Activated B cell treated with CpG ODN at 0.5 μM for 24 hours (primary cell): ENCODE measurements at regions of chr22 and their contacts with region 1.

Region 1: DNA sequence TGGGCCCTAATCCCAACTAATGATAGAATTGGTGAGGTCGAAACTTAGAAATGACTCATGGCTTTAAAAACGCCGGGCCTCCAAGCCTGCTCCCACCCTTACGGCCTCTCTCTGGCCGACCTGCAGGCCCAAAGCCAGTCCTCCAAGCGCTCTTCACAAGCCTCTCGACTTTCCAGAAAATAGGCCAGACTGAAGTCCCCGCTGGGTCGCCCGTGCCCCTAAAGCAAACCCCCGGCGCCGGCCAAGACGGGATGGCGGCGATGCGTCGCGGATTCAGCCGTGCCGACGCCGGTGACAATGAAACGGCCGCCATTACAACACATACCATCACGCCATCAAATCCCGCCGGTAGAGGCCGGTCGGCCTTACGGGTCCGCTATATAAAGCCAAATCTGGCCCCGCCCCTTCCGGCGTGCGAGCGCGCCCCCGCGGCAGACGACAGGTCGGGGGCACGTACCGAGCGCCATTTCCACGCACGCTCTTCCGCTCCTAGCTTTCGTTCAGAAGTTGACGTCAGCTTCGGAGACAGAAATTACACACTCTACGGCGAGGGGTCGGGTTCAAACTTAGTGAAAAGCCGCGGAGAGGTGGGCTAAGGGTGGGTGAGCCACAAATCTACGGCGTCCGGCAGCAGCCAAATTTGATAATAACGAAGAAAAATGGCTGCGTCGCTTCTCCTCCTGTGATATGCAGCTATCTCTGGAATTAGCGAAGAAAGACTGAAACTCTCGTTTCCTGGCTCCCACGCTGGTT is at the start of gene RPL3:
- DNase-seq: peak; percentile 99
- ATAC-seq: peak; percentile 87
- H3K4me3 Mint-ChIP-seq: peak within 1 kb of the TSS; percentile 100
- H3K27ac Mint-ChIP-seq: peak within 1 kb of the TSS; percentile 99
- H3K4me1 Mint-ChIP-seq: peaks cover 46% of the 10 kb centered on the region
- H3K27me3 Mint-ChIP-seq: peaks cover 2% of the 10 kb centered on the region
- CTCF ChIP-seq: no peak
- total RNA-seq, gene RPL3: 3,087 and 3,439 TPM in 2 replicates

Region 2: DNA sequence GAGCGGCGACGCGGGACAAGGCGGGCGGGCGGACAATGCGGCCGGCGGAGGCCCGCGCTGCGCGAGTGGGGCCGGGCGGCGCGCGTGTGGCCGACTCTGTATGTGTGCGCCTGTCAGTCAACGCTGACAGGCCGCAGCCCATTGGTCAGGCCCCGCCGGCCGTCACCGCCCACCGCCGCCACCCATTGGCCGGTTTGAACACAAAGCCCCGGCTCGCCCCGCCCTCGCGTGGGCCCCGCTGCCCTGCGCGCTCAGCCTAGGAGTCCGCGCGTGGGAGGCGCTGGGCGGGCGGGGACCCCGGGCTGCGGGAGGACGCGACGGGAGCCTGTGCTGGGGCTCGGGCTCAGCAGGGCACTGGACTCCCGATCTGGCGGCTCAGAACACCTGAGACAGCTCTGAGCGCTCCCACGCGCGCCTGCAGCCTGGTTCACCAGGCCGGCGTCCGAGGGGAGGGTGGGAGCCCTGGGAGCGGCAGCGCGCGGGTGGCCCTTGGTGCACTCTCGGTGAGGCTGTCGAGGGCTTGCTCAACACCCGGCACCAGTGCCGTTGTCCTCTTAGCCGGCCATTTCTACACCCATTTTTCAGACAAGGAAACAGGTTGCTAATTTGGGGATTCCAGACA is 563.4 kb before region 1 on chr22 and contains the start of gene SUN2:
- CTCF ChIA-PET with region 1: no interaction called
- POLR2A ChIA-PET with region 1: interaction called, 11 read pairs
- intact Hi-C with region 1: loop called (anchors 5 kb)
- DNase-seq: peak; percentile 92
- ATAC-seq: peak; percentile 75
- H3K4me3 Mint-ChIP-seq: peak within 1 kb of the TSS; percentile 92
- H3K27ac Mint-ChIP-seq: peak within 1 kb of the TSS; percentile 99
- H3K4me1 Mint-ChIP-seq: peaks cover 71% of the 10 kb centered on the region
- H3K27me3 Mint-ChIP-seq: no peaks in the 10 kb centered on the region
- CTCF ChIP-seq: no peak
- total RNA-seq, gene SUN2: 122 and 146 TPM in 2 replicates

Region 3: GRCh38 chr22:39144101-39144767 is 175.2 kb before region 1 on chr22:
- CTCF ChIA-PET with region 1: interaction called, 3 read pairs
- POLR2A ChIA-PET with region 1: interaction called, 44 read pairs
- intact Hi-C with region 1: no loop called
- DNase-seq: peak; percentile 52
- ATAC-seq: peak; percentile 40
- H3K4me3 Mint-ChIP-seq: peak overlapping the region; percentile 92
- H3K27ac Mint-ChIP-seq: peak overlapping the region; percentile 82
- H3K4me1 Mint-ChIP-seq: peaks cover 38% of the 10 kb centered on the region
- H3K27me3 Mint-ChIP-seq: no peaks in the 10 kb centered on the region
- CTCF ChIP-seq: no peak

Region 4: DNA sequence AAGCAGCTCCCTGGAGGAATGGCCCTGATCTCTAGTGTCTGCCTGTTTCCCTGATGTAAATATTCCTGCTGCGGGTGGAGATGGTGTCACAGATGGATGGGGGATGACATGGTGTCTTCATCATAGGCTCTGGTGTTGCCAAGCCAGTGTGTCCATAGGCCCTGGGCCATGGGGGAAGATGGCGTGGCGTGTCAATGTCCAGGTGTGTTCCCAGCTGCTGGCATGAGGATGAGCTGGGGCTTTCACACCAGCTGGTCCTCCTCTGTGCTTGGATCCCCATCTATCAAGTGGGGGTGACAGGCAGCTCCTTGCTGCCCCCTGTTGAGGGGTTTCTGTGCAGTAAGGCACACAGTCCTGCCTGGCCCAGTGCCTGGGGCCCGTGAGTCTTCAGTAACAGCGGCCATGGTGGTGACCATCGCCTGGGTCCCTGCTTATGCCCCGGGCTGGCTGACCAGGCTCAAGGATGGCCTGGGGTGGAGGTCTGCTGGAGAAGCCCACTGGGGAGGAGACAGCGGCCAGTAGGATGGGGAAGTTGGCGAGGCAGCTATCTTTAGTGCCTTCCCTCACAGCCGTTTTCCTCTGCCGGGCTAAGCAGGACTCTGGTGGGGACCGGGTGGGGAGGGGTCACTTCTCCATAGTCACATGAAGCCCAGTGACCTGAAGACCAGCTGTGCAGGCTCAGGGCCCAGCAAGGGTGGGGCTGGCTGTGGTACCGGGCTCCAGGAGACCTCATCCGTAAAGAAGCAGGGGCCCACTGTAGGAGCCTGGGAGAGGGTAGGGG is 12.7 kb before region 1 on chr22:
- CTCF ChIA-PET with region 1: interaction called, 4 read pairs
- POLR2A ChIA-PET with region 1: interaction called, 28 read pairs
- intact Hi-C with region 1: no loop called
- DNase-seq: no peak
- ATAC-seq: peak; percentile 29
- H3K4me3 Mint-ChIP-seq: no peak overlapping the region
- H3K27ac Mint-ChIP-seq: no peak overlapping the region
- H3K4me1 Mint-ChIP-seq: peaks cover 17% of the 10 kb centered on the region
- H3K27me3 Mint-ChIP-seq: no peaks in the 10 kb centered on the region
- CTCF ChIP-seq: no peak

Region 5: DNA sequence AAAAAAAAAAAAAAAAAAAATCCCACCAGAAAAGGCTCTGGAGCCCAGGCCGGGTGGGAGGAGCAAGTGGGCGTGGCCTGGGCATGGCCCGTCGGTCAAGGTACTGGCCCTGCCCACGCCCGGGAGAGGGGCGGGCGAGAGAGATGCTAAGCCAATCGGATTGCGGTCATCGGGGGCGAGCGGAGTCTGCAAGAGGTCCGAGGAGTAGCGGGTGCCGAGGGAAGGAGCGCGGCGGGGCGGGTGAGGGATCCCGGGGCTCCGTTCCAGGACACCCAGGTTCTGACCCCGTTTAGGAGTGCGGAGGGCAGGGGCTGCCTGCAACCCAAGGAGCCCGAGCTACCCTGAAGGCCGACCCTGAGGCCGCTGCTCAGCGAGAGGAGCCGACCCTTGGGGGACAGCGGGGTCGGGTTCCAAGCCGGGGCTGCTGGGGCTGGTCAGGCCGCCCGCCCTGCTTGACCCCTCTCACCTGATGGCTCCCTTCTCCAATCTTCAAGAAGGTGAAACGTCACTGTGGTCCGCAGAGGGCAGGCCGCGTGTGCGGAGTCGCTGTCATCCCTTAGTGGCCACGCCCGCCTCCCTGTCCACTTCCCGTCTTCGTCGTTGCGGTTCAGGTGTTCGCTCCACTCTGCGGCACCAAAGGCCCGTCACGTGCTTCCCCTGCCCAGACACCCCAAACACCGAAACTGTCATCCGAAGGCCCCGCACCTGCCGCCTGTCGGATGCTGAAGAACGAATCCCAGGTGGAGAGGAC is 69.0 kb after region 1 on chr22:
- CTCF ChIA-PET with region 1: no interaction called
- POLR2A ChIA-PET with region 1: interaction called, 14 read pairs
- intact Hi-C with region 1: no loop called
- DNase-seq: peak; percentile 66
- ATAC-seq: peak; percentile 90
- H3K4me3 Mint-ChIP-seq: peak overlapping the region; percentile 86
- H3K27ac Mint-ChIP-seq: peak overlapping the region; percentile 86
- H3K4me1 Mint-ChIP-seq: peaks cover 17% of the 10 kb centered on the region
- H3K27me3 Mint-ChIP-seq: no peaks in the 10 kb centered on the region
- CTCF ChIP-seq: no peak

Region 6: GRCh38 chr22:39471381-39472141 is 152.1 kb after region 1 on chr22:
- CTCF ChIA-PET with region 1: no interaction called
- POLR2A ChIA-PET with region 1: interaction called, 11 read pairs
- intact Hi-C with region 1: no loop called
- DNase-seq: peak; percentile 47
- ATAC-seq: peak; percentile 79
- H3K4me3 Mint-ChIP-seq: peak overlapping the region; percentile 65
- H3K27ac Mint-ChIP-seq: peak overlapping the region; percentile 90
- H3K4me1 Mint-ChIP-seq: peaks cover 73% of the 10 kb centered on the region
- H3K27me3 Mint-ChIP-seq: no peaks in the 10 kb centered on the region
- CTCF ChIP-seq: no peak

Region 7: GRCh38 chr22:39545386-39546365 is 226.2 kb after region 1 on chr22:
- CTCF ChIA-PET with region 1: no interaction called
- POLR2A ChIA-PET with region 1: no interaction called
- intact Hi-C with region 1: no loop called
- DNase-seq: peak; percentile 39
- ATAC-seq: no peak
- H3K4me3 Mint-ChIP-seq: no peak overlapping the region
- H3K27ac Mint-ChIP-seq: no peak overlapping the region
- H3K4me1 Mint-ChIP-seq: peaks cover 4% of the 10 kb centered on the region
- H3K27me3 Mint-ChIP-seq: peaks cover 50% of the 10 kb centered on the region
- CTCF ChIP-seq: no peak

Region 8: GRCh38 chr22:40044102-40044869 is 724.8 kb after region 1 on chr22:
- CTCF ChIA-PET with region 1: no interaction called
- POLR2A ChIA-PET with region 1: interaction called, 34 read pairs
- intact Hi-C with region 1: loop called (anchors 1 kb)
- DNase-seq: peak; percentile 94
- ATAC-seq: peak; percentile 85
- H3K4me3 Mint-ChIP-seq: peak overlapping the region; percentile 90
- H3K27ac Mint-ChIP-seq: peak overlapping the region; percentile 99
- H3K4me1 Mint-ChIP-seq: peaks cover 48% of the 10 kb centered on the region
- H3K27me3 Mint-ChIP-seq: peaks cover 12% of the 10 kb centered on the region
- CTCF ChIP-seq: no peak